ENCODE measurements at regions of chr6 and their contacts with region 1.

Region 1: DNA sequence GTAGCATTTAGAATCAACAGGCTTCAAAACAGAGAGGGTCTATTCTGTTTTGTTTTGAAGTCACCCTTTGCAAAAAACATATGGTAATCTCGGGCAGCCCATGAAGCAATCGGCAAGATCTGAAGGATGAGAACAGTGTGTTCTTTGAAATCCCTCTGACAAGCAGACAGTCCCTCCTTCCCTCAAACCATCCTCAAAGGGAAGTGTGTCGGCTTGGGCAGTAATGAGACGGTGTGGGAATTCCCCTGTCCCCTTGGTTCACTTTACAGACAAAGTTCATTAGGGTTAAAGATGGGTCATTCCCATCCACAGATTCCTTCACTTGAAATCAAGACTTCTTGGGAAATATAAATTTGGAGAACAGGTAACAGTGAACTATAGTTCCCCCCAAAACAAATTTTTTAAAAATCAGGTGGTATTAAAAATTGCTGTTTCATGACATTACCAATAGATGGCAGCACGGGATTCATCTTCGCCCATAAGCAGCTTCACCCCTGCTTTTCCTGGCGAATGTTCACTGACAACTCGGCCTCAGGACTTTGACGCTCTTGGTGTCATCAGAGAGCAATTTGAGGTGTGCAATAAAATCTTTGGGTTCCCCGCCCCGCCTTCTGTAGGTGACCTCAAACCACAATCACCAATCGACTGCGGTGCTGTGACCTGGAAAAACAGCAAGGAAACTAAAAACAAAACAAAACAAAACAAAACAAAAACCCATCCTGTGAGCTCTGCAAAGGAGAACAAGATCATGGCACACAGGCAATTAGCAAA is 159.3 kb upstream of the TNFAIP3 start:
- DNase-seq: no peak

Region 2: GRCh38 chr6:137866914-137867684 is 159.3 kb after region 1 on chr6 and contains the start of gene TNFAIP3:
- intact Hi-C with region 1: loop called (anchors 1 kb)
- DNase-seq: peak; percentile 98
- total RNA-seq, gene TNFAIP3: 7.9 TPM

Region 3: DNA sequence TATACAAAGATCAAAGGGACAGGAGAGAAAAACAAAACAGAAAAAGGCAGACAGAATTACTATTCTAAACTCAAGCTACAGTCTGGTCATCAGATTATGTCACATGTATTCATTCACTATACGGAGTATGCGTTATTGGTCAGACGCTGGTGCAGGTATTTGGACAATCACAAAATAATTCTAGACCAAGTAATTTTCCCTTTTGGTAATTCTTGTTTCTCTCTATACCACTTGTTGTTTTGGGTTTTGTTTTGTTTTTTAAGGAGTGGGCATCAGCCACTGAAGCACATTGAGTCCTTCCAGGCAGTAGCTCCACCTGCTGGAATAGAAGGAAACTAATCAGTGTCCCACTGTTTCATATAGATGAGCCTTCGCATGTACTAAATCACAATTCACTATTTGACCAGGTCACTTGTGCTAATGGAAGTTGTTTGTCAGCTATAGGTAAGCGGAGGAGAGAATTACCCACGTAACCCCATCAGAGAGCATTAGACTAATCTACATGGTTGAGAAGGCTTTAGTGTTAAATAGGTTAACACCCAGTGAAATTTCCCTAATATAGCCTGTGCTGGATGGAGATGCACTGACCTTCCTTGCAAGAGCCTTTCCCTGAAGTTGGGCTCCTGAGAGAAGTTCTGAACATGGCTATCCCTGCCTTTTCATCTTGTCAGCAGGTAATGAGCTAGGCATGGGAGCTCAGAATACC is 237.2 kb after region 1 on chr6:
- intact Hi-C with region 1: loop called (anchors 2 kb)
- DNase-seq: no peak

Region 4: DNA sequence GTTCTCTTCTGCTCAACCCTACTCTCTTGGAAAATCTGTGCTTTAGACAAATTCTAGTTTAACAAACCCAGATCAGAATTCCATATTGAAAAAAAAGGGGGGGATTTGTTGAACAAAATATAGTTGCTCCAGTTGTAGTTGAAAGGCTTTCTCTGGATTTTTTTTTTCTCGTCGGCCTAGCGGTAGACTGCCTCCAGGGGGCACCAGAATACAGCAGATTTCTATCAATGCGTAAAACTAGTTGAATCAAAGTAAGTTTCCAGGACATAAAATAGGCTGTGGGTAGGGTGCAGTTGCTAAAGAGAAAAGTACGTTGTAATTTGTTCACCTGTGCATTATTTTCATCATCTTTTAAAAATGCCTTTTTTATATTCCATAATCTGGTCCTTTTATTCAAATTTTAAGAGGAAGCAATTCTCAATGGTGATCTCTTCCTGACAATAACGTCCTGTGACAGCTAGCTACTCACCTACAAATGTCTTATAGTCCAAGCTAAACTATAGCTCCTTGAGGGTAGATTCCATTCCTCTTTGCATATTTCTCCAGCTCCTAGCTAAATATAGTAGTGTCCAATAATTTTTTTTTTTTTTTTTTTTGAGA is 294.1 kb after region 1 on chr6:
- intact Hi-C with region 1: loop called (anchors 5 kb)
- DNase-seq: no peak

Region 5: GRCh38 chr6:138109042-138109997 is 401.5 kb after region 1 on chr6:
- intact Hi-C with region 1: loop called (anchors 10 kb)
- DNase-seq: no peak

Measured in cardiac septum (tissue), 1 donor.